ENCODE measurements at regions of chr10 and their contacts with region 1.

Region 1: GRCh38 chr10:125448607-125449006 is 234.4 kb downstream of the TEX36 start:
- DNase-seq: peak; percentile 83
- ATAC-seq: peak; percentile 92
- H3K4me3 Mint-ChIP-seq: no peak overlapping the region
- H3K27ac Mint-ChIP-seq: no peak overlapping the region
- H3K4me1 Mint-ChIP-seq: no peaks in the 10 kb centered on the region
- H3K27me3 Mint-ChIP-seq: peaks cover 29% of the 10 kb centered on the region
- CTCF ChIP-seq: peak; percentile 92

Region 2: GRCh38 chr10:125370578-125370977 is 78.0 kb before region 1 on chr10:
- CTCF ChIA-PET with region 1: interaction called, 17 read pairs
- POLR2A ChIA-PET with region 1: no interaction called
- DNase-seq: peak; percentile 93
- ATAC-seq: peak; percentile 99
- H3K4me3 Mint-ChIP-seq: no peak overlapping the region
- H3K27ac Mint-ChIP-seq: no peak overlapping the region
- H3K4me1 Mint-ChIP-seq: peaks cover 9% of the 10 kb centered on the region
- H3K27me3 Mint-ChIP-seq: peaks cover 9% of the 10 kb centered on the region
- CTCF ChIP-seq: no peak

Region 3: GRCh38 chr10:125491381-125491780 is 42.8 kb after region 1 on chr10:
- CTCF ChIA-PET with region 1: interaction called, 10 read pairs
- POLR2A ChIA-PET with region 1: no interaction called
- DNase-seq: no peak
- ATAC-seq: no peak
- H3K4me3 Mint-ChIP-seq: no peak overlapping the region
- H3K27ac Mint-ChIP-seq: no peak overlapping the region
- H3K4me1 Mint-ChIP-seq: peaks cover 6% of the 10 kb centered on the region
- H3K27me3 Mint-ChIP-seq: no peaks in the 10 kb centered on the region; the same call in 1 of the 2 replicates
- CTCF ChIP-seq: no peak